ENCODE measurements at regions of chr20 and their contacts with region 1.

Region 1: DNA sequence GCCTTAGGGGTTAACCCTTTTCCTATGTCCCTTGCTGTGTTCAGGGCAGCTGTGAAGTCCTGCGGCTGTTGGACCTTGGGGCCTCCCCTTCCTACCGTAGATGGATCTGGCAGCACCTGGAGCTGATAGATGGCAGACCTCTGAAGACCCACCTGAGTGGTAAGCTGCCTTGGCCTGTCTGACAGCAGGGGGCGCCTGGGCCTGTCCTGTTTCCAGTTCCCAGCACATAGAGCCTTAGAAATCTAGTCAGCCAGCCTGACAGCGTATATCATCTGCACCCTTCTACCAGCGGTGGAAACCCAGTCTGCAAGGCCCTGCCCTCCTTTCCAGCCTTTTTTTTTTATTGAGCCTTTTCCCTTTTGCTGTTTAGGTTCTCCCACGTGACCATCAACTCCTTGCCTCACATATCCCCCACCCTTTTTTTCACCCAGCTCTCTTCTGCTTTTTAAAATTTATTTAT is 26.6 kb downstream of the CNBD2 start:
- DNase-seq: peak; percentile 78 to 93 (median 87)
- H3K4me3 ChIP-seq: no peak overlapping the region
- H3K27ac ChIP-seq: no peak overlapping the region
- H3K4me1 ChIP-seq: no peaks in the 10 kb centered on the region
- H3K27me3 ChIP-seq: no peaks in the 10 kb centered on the region
- CTCF ChIP-seq: peak; percentile 83 to 93 (median 90)
- POLR2A ChIP-seq: no peak

Region 2: GRCh38 chr20:36135159-36135558 is 140.1 kb after region 1 on chr20:
- intact Hi-C with region 1: loop called (anchors 5 kb)
- DNase-seq: no peak
- H3K4me3 ChIP-seq: no peak overlapping the region
- H3K27ac ChIP-seq: no peak overlapping the region
- H3K4me1 ChIP-seq: no peaks in the 10 kb centered on the region
- H3K27me3 ChIP-seq: no peaks in the 10 kb centered on the region
- CTCF ChIP-seq: no peak
- POLR2A ChIP-seq: no peak

Measured in adrenal gland (tissue), 19 donors.